CD4-positive, alpha-beta memory T cell (primary cell): ENCODE measurements at regions of chr1 and their contacts with region 1.

Region 1: GRCh38 chr1:156129706-156130581 is 15.4 kb downstream of the LMNA start:
- DNase-seq: peak; percentile 62 to 78 (median 69)
- H3K4me3 ChIP-seq: no peak overlapping the region
- H3K4me3 Mint-ChIP-seq: peak overlapping the region in 4 of 8 donors; percentile 18 to 57 (median 46)
- H3K27ac ChIP-seq: no peak overlapping the region
- H3K27ac Mint-ChIP-seq: peak overlapping the region; percentile 71 to 97 (median 91)
- H3K4me1 ChIP-seq: peaks cover 51% of the 10 kb centered on the region
- H3K4me1 Mint-ChIP-seq: peaks cover 26 to 55% (median 46%) of the 10 kb centered on the region in 4 donors
- H3K27me3 ChIP-seq: no peaks in the 10 kb centered on the region
- H3K27me3 Mint-ChIP-seq: no peaks in the 10 kb centered on the region

Region 2: GRCh38 chr1:156082309-156083091 is 47.4 kb before region 1 on chr1 and contains the start of gene MEX3A:
- CTCF ChIA-PET with region 1: interaction called, 716 read pairs
- POLR2A ChIA-PET with region 1: no interaction called
- intact Hi-C with region 1: no loop called
- DNase-seq: peak; percentile 51 to 61 (median 58)
- H3K4me3 ChIP-seq: peak within 1 kb of the TSS; percentile 68 to 81
- H3K4me3 Mint-ChIP-seq: peak within 1 kb of the TSS; percentile 83 to 88 (median 86)
- H3K27ac ChIP-seq: peak within 1 kb of the TSS; percentile 43
- H3K27ac Mint-ChIP-seq: peak within 1 kb of the TSS in 3 of 7 donors; percentile 72 to 86 (median 84)
- H3K4me1 ChIP-seq: peaks cover 19% of the 10 kb centered on the region
- H3K4me1 Mint-ChIP-seq: peaks cover 5 to 15% (median 9%) of the 10 kb centered on the region in 4 donors
- H3K27me3 ChIP-seq: peaks cover 10% of the 10 kb centered on the region
- H3K27me3 Mint-ChIP-seq: peaks cover 10 to 20% of the 10 kb centered on the region in 2 donors
- total RNA-seq, gene MEX3A: not detected

Region 3: DNA sequence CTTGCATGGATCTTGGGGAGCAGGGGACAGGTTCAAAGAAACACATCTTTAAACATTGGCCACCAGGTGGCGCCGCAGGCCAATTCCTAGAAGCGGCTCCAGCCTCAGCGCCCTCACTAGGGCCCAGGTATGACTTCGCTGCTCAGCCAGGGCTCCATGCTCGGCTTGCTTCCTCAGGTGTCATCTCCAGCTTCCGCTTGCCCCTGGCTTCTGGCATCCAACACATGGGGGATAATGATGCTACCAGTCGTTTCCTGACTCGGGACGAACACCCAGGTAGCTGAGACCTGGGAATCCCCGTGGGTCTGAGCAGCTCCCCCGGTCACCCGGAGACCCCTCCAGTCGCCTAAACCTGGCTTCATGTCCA is 39.1 kb before region 1 on chr1:
- CTCF ChIA-PET with region 1: interaction called, 716 read pairs
- POLR2A ChIA-PET with region 1: interaction called, 527 read pairs
- intact Hi-C with region 1: loop called (anchors 1 kb)
- DNase-seq: peak; percentile 78 to 84 (median 81)
- H3K4me3 ChIP-seq: no peak overlapping the region
- H3K4me3 Mint-ChIP-seq: peak overlapping the region in 1 of 8 donors; percentile 16
- H3K27ac ChIP-seq: no peak overlapping the region
- H3K27ac Mint-ChIP-seq: peak overlapping the region in 5 of 7 donors; percentile 11 to 79 (median 61)
- H3K4me1 ChIP-seq: peaks cover 6% of the 10 kb centered on the region
- H3K4me1 Mint-ChIP-seq: peaks cover 6 to 18% (median 12%) of the 10 kb centered on the region in 4 donors
- H3K27me3 ChIP-seq: no peaks in the 10 kb centered on the region
- H3K27me3 Mint-ChIP-seq: peaks cover 6 to 7% of the 10 kb centered on the region in 2 donors

Region 4: GRCh38 chr1:156096640-156097391 is 33.1 kb before region 1 on chr1:
- CTCF ChIA-PET with region 1: interaction called, 716 read pairs
- POLR2A ChIA-PET with region 1: interaction called, 527 read pairs
- intact Hi-C with region 1: loop called (anchors 1 kb)
- DNase-seq: peak; percentile 88 to 98 (median 91)
- H3K4me3 ChIP-seq: peak overlapping the region in 1 of 2 donors; percentile 39
- H3K4me3 Mint-ChIP-seq: peak overlapping the region; percentile 39 to 85 (median 78)
- H3K27ac ChIP-seq: peak overlapping the region; percentile 78
- H3K27ac Mint-ChIP-seq: peak overlapping the region; percentile 90 to 100 (median 99)
- H3K4me1 ChIP-seq: peaks cover 37% of the 10 kb centered on the region
- H3K4me1 Mint-ChIP-seq: peaks cover 42 to 59% (median 48%) of the 10 kb centered on the region in 4 donors
- H3K27me3 ChIP-seq: no peaks in the 10 kb centered on the region
- H3K27me3 Mint-ChIP-seq: peaks cover 3 to 4% of the 10 kb centered on the region in 2 donors

Region 5: DNA sequence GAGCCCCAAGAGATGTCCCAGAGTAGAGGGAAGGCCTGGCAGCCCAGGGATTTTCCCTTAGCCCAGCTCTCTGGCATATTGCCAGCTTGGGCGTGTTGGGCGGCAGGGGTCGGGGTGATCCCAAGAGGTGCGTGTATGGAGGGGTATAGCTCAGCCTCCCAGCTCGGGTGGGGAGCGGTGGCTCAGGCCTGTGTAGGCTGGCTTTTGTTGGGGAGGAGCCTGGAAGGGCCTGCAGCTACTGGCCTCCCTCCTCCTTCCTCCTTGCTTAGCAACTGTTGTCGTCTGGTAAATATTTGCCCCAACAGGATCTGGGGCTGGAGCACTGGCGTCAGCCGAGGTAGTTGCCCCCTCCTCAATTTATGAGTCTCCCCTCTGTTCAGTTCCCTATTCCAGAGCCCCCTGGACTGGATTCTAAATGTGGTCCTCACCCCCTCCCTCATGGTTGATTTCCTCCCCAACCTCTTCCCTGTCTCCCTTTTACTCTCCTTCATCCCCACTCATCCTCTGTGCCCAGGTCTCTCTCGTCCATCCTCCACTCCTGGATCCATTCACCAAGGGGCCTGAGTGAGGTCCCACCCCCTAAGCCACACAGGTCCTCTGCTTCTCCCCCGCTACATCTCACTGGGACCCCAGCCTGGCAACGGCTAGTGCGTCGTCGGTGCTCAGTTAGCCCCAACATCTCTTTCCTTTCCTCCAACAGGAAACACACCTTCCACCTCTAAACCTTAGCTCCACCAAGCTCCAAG is 25.7 kb before region 1 on chr1:
- CTCF ChIA-PET with region 1: interaction called, 716 read pairs
- POLR2A ChIA-PET with region 1: interaction called, 527 read pairs
- intact Hi-C with region 1: loop called (anchors 2 kb)
- DNase-seq: peak; percentile 78 to 90 (median 83)
- H3K4me3 ChIP-seq: no peak overlapping the region
- H3K4me3 Mint-ChIP-seq: peak overlapping the region; percentile 60 to 88 (median 74)
- H3K27ac ChIP-seq: peak overlapping the region; percentile 94
- H3K27ac Mint-ChIP-seq: peak overlapping the region; percentile 90 to 100 (median 100)
- H3K4me1 ChIP-seq: peaks cover 55% of the 10 kb centered on the region
- H3K4me1 Mint-ChIP-seq: peaks cover 42 to 86% (median 60%) of the 10 kb centered on the region in 4 donors
- H3K27me3 ChIP-seq: no peaks in the 10 kb centered on the region
- H3K27me3 Mint-ChIP-seq: no peaks in the 10 kb centered on the region

Region 6: GRCh38 chr1:156114101-156114916 is 15.6 kb before region 1 on chr1 and contains the start of gene LMNA:
- CTCF ChIA-PET with region 1: interaction called, 24 read pairs
- POLR2A ChIA-PET with region 1: interaction called, 110 read pairs
- intact Hi-C with region 1: loop called (anchors 1 kb)
- DNase-seq: peak; percentile 73 to 96 (median 74)
- H3K4me3 ChIP-seq: peak within 1 kb of the TSS; percentile 81
- H3K4me3 Mint-ChIP-seq: peak within 1 kb of the TSS; percentile 94 to 98 (median 96)
- H3K27ac ChIP-seq: peak within 1 kb of the TSS; percentile 91
- H3K27ac Mint-ChIP-seq: peak within 1 kb of the TSS; percentile 95 to 99 (median 98)
- H3K4me1 ChIP-seq: peaks cover 41% of the 10 kb centered on the region
- H3K4me1 Mint-ChIP-seq: peaks cover 12 to 49% (median 27%) of the 10 kb centered on the region in 4 donors
- H3K27me3 ChIP-seq: no peaks in the 10 kb centered on the region
- H3K27me3 Mint-ChIP-seq: no peaks in the 10 kb centered on the region
- total RNA-seq, gene LMNA: 29.7 to 33.8 TPM

Region 7: GRCh38 chr1:156146020-156146768 is 16.2 kb after region 1 on chr1:
- CTCF ChIA-PET with region 1: interaction called, 28 read pairs
- POLR2A ChIA-PET with region 1: interaction called, 3 read pairs
- intact Hi-C with region 1: no loop called
- DNase-seq: peak; percentile 61 to 76 (median 73)
- H3K4me3 ChIP-seq: no peak overlapping the region
- H3K4me3 Mint-ChIP-seq: peak overlapping the region; percentile 60 to 87 (median 76)
- H3K27ac ChIP-seq: no peak overlapping the region
- H3K27ac Mint-ChIP-seq: peak overlapping the region in 6 of 7 donors; percentile 72 to 92 (median 80)
- H3K4me1 ChIP-seq: peaks cover 11% of the 10 kb centered on the region
- H3K4me1 Mint-ChIP-seq: peaks cover 8 to 22% (median 13%) of the 10 kb centered on the region in 4 donors
- H3K27me3 ChIP-seq: no peaks in the 10 kb centered on the region
- H3K27me3 Mint-ChIP-seq: peaks cover 0 to 3% of the 10 kb centered on the region in 2 donors

Region 8: DNA sequence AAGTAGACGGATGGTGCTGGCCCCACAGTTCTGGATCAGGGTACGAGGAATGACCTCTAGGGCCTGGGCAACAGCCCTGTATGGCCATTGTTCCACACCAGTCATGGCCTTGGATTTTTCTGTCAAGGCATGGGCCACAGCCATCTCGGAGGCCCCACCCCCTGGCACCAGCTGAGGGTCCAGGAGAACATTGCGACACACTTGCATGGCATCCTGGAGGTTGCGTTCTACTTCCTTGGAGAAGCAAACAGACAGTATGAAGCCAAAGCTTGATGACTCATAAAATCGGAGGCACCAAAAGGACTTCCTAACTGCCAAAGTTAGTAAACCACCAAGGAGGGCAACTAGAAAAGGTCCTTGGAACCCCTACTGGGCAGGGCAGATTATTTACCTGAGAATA is 181.0 kb after region 1 on chr1:
- CTCF ChIA-PET with region 1: no interaction called
- POLR2A ChIA-PET with region 1: no interaction called
- intact Hi-C with region 1: no loop called
- DNase-seq: no peak
- H3K4me3 ChIP-seq: no peak overlapping the region
- H3K4me3 Mint-ChIP-seq: no peak overlapping the region
- H3K27ac ChIP-seq: no peak overlapping the region
- H3K27ac Mint-ChIP-seq: peak overlapping the region in 2 of 7 donors; percentile 43 to 44
- H3K4me1 ChIP-seq: no peaks in the 10 kb centered on the region
- H3K4me1 Mint-ChIP-seq: peaks cover 0 to 2% (median 0%) of the 10 kb centered on the region in 4 donors
- H3K27me3 ChIP-seq: no peaks in the 10 kb centered on the region
- H3K27me3 Mint-ChIP-seq: no peaks in the 10 kb centered on the region

Region 9: GRCh38 chr1:156445789-156446263 is 315.9 kb after region 1 on chr1:
- CTCF ChIA-PET with region 1: no interaction called
- POLR2A ChIA-PET with region 1: no interaction called
- intact Hi-C with region 1: no loop called
- DNase-seq: peak; percentile 71 to 80 (median 74)
- H3K4me3 ChIP-seq: no peak overlapping the region
- H3K4me3 Mint-ChIP-seq: peak overlapping the region in 2 of 8 donors; percentile 43 to 60
- H3K27ac ChIP-seq: no peak overlapping the region
- H3K27ac Mint-ChIP-seq: peak overlapping the region in 2 of 7 donors; percentile 28 to 63
- H3K4me1 ChIP-seq: peaks cover 6% of the 10 kb centered on the region
- H3K4me1 Mint-ChIP-seq: peaks cover 3 to 8% (median 7%) of the 10 kb centered on the region in 4 donors
- H3K27me3 ChIP-seq: peaks cover 23% of the 10 kb centered on the region
- H3K27me3 Mint-ChIP-seq: peaks cover 42 to 44% of the 10 kb centered on the region in 2 donors